Gastrocnemius medialis (tissue), 4 donors: ENCODE measurements at regions of chr17 and their contacts with region 1.

Region 1: GRCh38 chr17:19992803-19993713 is 15.4 kb upstream of the AKAP10 start:
- DNase-seq: peak; percentile 68 to 80
- ATAC-seq: peak; percentile 94 to 99
- H3K4me3 ChIP-seq: peak overlapping the region in 2 of 4 donors; percentile 5 to 29
- H3K27ac ChIP-seq: no peak overlapping the region
- H3K4me1 ChIP-seq: peaks cover 3 to 4% of the 10 kb centered on the region in 2 donors
- H3K27me3 ChIP-seq: no peaks in the 10 kb centered on the region
- CTCF ChIP-seq: peak; percentile 67 to 81 (median 69)
- POLR2A ChIP-seq: no peak

Region 2: GRCh38 chr17:19948113-19948943 is 44.7 kb before region 1 on chr17:
- in situ Hi-C with region 1: no loop called
- intact Hi-C with region 1: no loop called
- DNase-seq: no peak
- ATAC-seq: peak in 1 of 2 donors; percentile 30
- H3K4me3 ChIP-seq: no peak overlapping the region
- H3K27ac ChIP-seq: peak overlapping the region in 1 of 4 donors; percentile 13
- H3K4me1 ChIP-seq: peaks cover 18 to 19% of the 10 kb centered on the region in 2 donors
- H3K27me3 ChIP-seq: no peaks in the 10 kb centered on the region
- CTCF ChIP-seq: no peak
- POLR2A ChIP-seq: no peak

Region 3: DNA sequence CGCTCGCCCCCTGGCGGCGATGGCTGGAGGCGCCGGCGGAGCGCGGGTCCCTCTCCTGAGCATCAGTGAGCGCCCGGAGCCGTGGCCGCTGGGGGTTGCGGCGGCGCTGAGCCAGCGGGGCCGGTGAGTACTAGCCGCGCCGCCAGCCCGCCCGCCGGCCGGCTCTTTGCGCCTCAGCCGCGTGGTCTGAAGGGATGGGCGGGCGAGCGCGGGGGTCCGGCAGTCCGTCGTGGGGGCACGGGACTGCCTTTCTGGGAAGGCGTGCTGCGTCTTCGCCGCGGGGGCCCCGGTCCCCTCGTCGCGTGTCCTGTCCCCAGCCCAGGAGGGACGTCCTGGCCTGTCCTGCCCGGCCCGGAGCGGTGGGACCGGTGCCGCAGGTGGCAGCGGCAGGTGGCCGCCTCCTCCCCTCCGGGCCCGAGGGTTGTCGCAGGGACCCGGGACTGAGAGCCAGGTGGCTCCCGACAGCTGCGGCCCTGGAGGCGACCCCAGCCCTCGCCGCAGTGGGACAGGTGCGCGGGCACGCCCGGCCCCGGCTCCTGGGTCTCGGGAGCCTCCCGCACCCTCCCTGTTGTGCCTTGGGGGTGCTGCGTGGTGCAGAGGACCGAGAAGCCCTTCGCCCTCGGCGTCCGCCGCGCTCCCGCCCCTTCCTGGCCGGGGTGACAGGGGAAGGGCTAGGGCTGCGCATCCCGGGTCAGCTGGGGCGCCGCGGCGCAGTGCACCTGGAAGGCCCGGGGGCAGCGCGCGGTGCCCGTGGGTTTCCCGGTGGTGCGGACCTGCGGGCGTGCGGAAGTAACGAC is 16.4 kb after region 1 on chr17 and contains the start of gene SPECC1:
- in situ Hi-C with region 1: no loop called
- intact Hi-C with region 1: loop called (anchors 1 kb)
- DNase-seq: peak; percentile 44 to 63
- ATAC-seq: peak; percentile 14 to 37
- H3K4me3 ChIP-seq: peak within 1 kb of the TSS; percentile 56 to 70 (median 64)
- H3K27ac ChIP-seq: peak within 1 kb of the TSS; percentile 72 to 83 (median 76)
- H3K4me1 ChIP-seq: peaks cover 0 to 9% of the 10 kb centered on the region in 2 donors
- H3K27me3 ChIP-seq: peaks cover 8 to 41% (median 11%) of the 10 kb centered on the region in 3 donors
- CTCF ChIP-seq: peak; percentile 83 to 99 (median 96)
- POLR2A ChIP-seq: peak; percentile 32 to 55
- total RNA-seq, gene SPECC1: 6.1 to 17.9 (median 9.5) TPM

Region 4: GRCh38 chr17:20114466-20114865 is 121.4 kb after region 1 on chr17:
- in situ Hi-C with region 1: loop called (anchors 5 kb)
- intact Hi-C with region 1: loop called (anchors 1 kb)
- DNase-seq: no peak
- ATAC-seq: no peak
- H3K4me3 ChIP-seq: no peak overlapping the region
- H3K27ac ChIP-seq: no peak overlapping the region
- H3K4me1 ChIP-seq: peaks cover 0 to 3% of the 10 kb centered on the region in 2 donors
- H3K27me3 ChIP-seq: no peaks in the 10 kb centered on the region
- CTCF ChIP-seq: no peak
- POLR2A ChIP-seq: no peak

Region 5: GRCh38 chr17:20300436-20300934 is 307.4 kb after region 1 on chr17:
- in situ Hi-C with region 1: loop called in 2 of 4 experiments (anchors 25 kb)
- intact Hi-C with region 1: no loop called
- DNase-seq: no peak
- ATAC-seq: no peak
- H3K4me3 ChIP-seq: no peak overlapping the region
- H3K27ac ChIP-seq: no peak overlapping the region
- H3K4me1 ChIP-seq: no peaks in the 10 kb centered on the region
- H3K27me3 ChIP-seq: no peaks in the 10 kb centered on the region
- CTCF ChIP-seq: no peak
- POLR2A ChIP-seq: no peak